Activated CD4-positive, alpha-beta T cell treated with anti-CD3 and anti-CD28 coated beads, Interleukin-2, amount 10 ng/mL, durations not matched to agents 24 days and 14 days (primary cell): ENCODE measurements at regions of chr11 and their contacts with region 1.

Region 1: GRCh38 chr11:112280268-112281126 is 19.8 kb upstream of the PLET1 start:
- DNase-seq: peak; percentile 91
- H3K4me3 Mint-ChIP-seq: peak overlapping the region; percentile 97
- H3K27ac Mint-ChIP-seq: peak overlapping the region; percentile 61
- H3K4me1 Mint-ChIP-seq: peaks cover 33% of the 10 kb centered on the region
- H3K27me3 Mint-ChIP-seq: peaks cover 1% of the 10 kb centered on the region

Region 2: DNA sequence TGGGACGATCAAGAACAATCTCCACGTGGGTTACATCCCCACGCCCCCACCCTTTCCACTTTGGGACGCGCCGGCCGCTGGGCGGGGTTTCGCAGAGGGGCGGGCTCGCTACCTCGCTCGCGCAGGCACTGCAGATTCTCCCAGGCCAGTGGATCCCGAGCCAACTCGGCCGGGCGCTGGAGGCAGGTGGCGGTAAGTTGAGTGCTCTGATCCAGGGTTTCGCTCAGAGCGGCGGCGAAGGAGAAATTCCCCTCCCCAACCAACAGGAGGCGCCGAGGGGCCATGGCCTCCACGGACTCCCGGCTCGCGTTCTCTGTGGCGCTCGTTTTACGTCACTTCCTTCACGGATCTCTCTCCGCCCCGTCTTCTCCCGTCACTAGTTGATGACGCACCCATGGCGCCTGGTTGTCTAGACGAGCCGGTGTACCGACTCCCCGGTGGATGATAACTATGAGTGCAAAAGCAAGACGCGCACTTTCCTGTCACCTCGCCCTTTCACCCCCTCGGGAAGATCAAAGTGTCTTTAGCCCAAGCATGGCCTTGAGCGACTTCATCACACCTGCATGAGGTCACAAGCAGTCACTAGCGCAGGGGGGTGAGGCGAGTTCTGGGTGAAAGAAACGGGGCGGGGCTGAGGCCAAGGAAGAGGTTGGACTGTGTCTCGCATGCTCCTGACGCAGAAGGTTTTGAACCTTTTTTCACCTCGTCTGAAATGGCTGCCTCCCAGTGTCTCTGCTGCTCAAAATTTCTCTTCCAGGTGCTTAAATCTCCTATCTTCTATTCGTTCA is 401.5 kb before region 1 on chr11 and contains the starts of genes CFAP68 and FDXACB1:
- intact Hi-C with region 1: loop called (anchors 10 kb)
- DNase-seq: peak; percentile 98
- H3K4me3 Mint-ChIP-seq: peak within 1 kb of the TSS; percentile 95
- H3K27ac Mint-ChIP-seq: peak within 1 kb of the TSS; percentile 99
- H3K4me1 Mint-ChIP-seq: peaks cover 10% of the 10 kb centered on the region
- H3K27me3 Mint-ChIP-seq: no peaks in the 10 kb centered on the region
- total RNA-seq, gene CFAP68: 22.6 and 25.5 TPM in 2 replicates
- total RNA-seq, gene FDXACB1: 8.8 and 10.0 TPM in 2 replicates

Region 3: DNA sequence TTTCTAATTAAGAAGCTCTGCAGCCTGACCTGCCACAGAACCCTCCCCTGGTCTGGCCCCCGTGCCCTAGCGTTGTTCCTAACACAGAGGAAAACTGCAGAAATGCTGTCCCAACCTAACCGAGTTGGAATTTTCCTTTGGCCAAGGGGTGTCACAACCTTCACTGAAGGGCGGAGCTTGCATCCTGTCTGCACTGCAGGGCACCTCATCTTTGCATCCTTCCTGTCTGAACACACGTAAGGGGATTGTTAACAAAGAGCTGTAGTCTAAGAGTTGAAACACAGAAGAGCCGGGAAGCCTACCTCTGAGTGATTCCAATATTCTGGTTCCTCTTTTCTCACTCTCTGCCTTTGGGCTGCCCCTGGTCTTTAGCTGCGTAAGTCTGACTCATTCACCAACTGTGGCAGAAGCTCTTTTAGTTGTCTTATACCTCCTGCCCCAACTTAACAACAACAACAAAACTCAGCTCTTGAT is 341.8 kb before region 1 on chr11:
- intact Hi-C with region 1: loop called (anchors 5 kb)
- DNase-seq: peak; percentile 81
- H3K4me3 Mint-ChIP-seq: peak overlapping the region; percentile 91
- H3K27ac Mint-ChIP-seq: peak overlapping the region; percentile 95
- H3K4me1 Mint-ChIP-seq: peaks cover 50% of the 10 kb centered on the region
- H3K27me3 Mint-ChIP-seq: no peaks in the 10 kb centered on the region

Region 4: GRCh38 chr11:112024773-112025678 is 255.5 kb before region 1 on chr11 and contains the start of gene DLAT:
- intact Hi-C with region 1: no loop called
- DNase-seq: peak; percentile 96
- H3K4me3 Mint-ChIP-seq: peak within 1 kb of the TSS; percentile 100
- H3K27ac Mint-ChIP-seq: peak within 1 kb of the TSS; percentile 100
- H3K4me1 Mint-ChIP-seq: peaks cover 16% of the 10 kb centered on the region
- H3K27me3 Mint-ChIP-seq: no peaks in the 10 kb centered on the region
- total RNA-seq, gene DLAT: 59.2 and 61.8 TPM in 2 replicates

Region 5: DNA sequence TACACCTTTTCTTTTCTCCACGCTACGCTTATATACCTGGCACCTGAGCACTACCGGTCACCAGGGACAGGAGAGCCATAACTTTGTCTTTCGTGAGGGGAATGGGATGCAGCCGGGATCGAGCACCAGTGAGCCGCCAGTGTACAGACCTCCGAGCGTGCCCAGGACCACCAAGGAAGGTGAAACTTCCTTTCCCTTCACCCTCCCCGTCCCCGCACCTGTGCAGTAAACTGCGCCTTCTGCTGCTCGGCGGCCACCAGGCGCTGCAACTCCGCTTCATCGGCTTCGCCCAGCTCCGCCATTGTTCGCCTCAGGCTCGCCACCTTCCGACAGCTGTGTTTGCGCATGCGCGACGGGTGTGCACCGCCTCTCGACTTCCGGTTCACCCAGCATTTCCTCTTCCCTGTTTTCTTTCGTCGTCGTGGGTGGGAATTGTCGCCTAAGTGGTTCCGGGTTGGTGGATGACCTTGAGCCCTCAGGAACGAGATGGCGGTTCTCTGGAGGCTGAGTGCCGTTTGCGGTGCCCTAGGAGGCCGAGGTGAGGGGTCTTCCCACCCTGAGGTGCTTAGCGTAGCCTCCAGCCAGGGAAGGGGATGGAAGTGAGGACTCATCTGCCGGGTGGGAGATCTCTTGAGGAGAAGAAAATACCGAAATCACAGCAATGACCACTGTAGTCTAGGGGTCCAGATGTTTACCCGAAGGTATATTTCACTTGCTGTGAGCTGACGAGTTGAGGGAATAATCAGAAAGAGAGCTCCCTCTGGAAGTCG is 193.9 kb before region 1 on chr11 and contains the starts of genes SDHD and TIMM8B:
- intact Hi-C with region 1: loop called (anchors 1 kb)
- DNase-seq: peak; percentile 99
- H3K4me3 Mint-ChIP-seq: peak within 1 kb of the TSS; percentile 100
- H3K27ac Mint-ChIP-seq: peak within 1 kb of the TSS; percentile 99
- H3K4me1 Mint-ChIP-seq: peaks cover 52% of the 10 kb centered on the region
- H3K27me3 Mint-ChIP-seq: peaks cover 2% of the 10 kb centered on the region
- total RNA-seq, gene SDHD: 95.2 and 101 TPM in 2 replicates
- total RNA-seq, gene TIMM8B: 86.3 and 89.7 TPM in 2 replicates

Region 6: GRCh38 chr11:112113539-112114457 is 166.7 kb before region 1 on chr11:
- intact Hi-C with region 1: loop called (anchors 1 kb)
- DNase-seq: no peak
- H3K4me3 Mint-ChIP-seq: no peak overlapping the region
- H3K27ac Mint-ChIP-seq: no peak overlapping the region
- H3K4me1 Mint-ChIP-seq: peaks cover 3% of the 10 kb centered on the region
- H3K27me3 Mint-ChIP-seq: no peaks in the 10 kb centered on the region

Region 7: GRCh38 chr11:112226062-112226830 is 54.3 kb before region 1 on chr11 and contains the start of gene PTS:
- intact Hi-C with region 1: loop called (anchors 1 kb)
- DNase-seq: peak; percentile 96
- H3K4me3 Mint-ChIP-seq: peak within 1 kb of the TSS; percentile 94
- H3K27ac Mint-ChIP-seq: peak within 1 kb of the TSS; percentile 94
- H3K4me1 Mint-ChIP-seq: peaks cover 17% of the 10 kb centered on the region
- H3K27me3 Mint-ChIP-seq: peaks cover 3% of the 10 kb centered on the region
- total RNA-seq, gene PTS: 33.1 and 34.4 TPM in 2 replicates

Region 8: DNA sequence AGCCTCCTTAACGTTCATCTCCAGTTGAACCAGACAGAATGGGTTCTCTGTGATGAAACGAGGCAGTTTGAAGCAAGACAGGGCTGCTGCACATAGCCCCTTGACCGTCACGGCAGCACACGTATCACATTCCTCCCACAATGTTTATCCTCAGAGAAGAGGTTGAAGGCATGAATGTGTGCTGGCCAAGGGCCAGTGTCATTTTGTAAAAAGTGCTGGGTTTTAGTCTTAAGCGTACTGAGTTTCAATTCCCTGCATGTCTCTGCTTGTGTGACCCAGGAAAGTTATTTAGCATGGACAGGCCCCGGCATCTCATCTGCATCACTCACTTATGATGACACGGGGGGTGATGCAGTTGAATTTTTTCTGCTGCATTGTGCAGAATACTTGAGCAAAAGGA is 1065.5 kb after region 1 on chr11:
- intact Hi-C with region 1: no loop called
- DNase-seq: no peak
- H3K4me3 Mint-ChIP-seq: no peak overlapping the region
- H3K27ac Mint-ChIP-seq: no peak overlapping the region
- H3K4me1 Mint-ChIP-seq: no peaks in the 10 kb centered on the region
- H3K27me3 Mint-ChIP-seq: no peaks in the 10 kb centered on the region